Activated CD8-positive, alpha-beta T cell treated with anti-CD3 and anti-CD28 coated beads for 36 hours (primary cell): ENCODE measurements at regions of chr1 and their contacts with region 1.

Region 1: GRCh38 chr1:18902523-18903290 is at the start of gene ALDH4A1:
- DNase-seq: peak; percentile 96
- ATAC-seq: peak; percentile 98
- H3K4me3 Mint-ChIP-seq: peak within 1 kb of the TSS; percentile 87
- H3K27ac Mint-ChIP-seq: peak within 1 kb of the TSS; percentile 98
- H3K4me1 Mint-ChIP-seq: peaks cover 22% of the 10 kb centered on the region
- H3K27me3 Mint-ChIP-seq: no peaks in the 10 kb centered on the region
- CTCF ChIP-seq: no peak
- total RNA-seq, gene ALDH4A1: 3.9 to 4.3 TPM

Region 2: GRCh38 chr1:18814425-18814824 is 88.3 kb before region 1 on chr1:
- CTCF ChIA-PET with region 1: no interaction called
- POLR2A ChIA-PET with region 1: no interaction called
- intact Hi-C with region 1: no loop called
- DNase-seq: no peak
- ATAC-seq: no peak
- H3K4me3 Mint-ChIP-seq: no peak overlapping the region
- H3K27ac Mint-ChIP-seq: no peak overlapping the region
- H3K4me1 Mint-ChIP-seq: no peaks in the 10 kb centered on the region
- H3K27me3 Mint-ChIP-seq: peaks cover 23% of the 10 kb centered on the region
- CTCF ChIP-seq: no peak

Region 3: DNA sequence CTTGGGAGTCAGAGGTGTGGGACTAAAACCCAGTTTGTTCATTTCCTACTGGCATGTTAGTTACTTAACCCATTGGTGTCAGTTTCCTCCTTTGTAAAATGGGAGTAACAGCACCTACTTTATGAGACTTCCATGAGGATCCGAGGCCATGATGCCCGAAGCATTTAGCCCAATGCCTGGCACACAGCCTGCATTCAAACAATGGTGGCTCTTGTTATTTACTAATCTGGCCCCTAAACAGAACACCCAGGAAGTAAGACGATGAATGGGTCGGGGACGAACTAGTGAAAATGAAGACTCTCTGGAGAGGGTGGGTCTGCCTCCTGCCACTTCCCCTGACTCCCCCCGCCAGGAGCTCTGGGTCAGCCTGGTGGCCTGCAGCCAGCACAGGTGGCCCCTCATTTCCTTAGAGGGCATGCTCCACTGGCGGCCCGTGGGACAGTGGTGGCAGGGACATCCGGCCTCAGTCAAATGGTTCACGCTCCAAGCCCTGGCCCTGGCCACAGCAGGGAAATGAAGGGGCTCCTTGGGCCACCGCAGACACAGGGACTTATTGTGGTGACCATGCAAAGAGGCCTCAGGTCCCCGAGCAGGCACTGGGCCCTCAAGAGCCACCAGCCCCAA is 33.8 kb before region 1 on chr1:
- CTCF ChIA-PET with region 1: no interaction called
- POLR2A ChIA-PET with region 1: no interaction called
- intact Hi-C with region 1: no loop called
- DNase-seq: no peak
- ATAC-seq: no peak
- H3K4me3 Mint-ChIP-seq: no peak overlapping the region
- H3K27ac Mint-ChIP-seq: no peak overlapping the region
- H3K4me1 Mint-ChIP-seq: no peaks in the 10 kb centered on the region
- H3K27me3 Mint-ChIP-seq: peaks cover 9% of the 10 kb centered on the region
- CTCF ChIP-seq: no peak

Region 4: GRCh38 chr1:18926315-18927081 is 23.8 kb after region 1 on chr1:
- CTCF ChIA-PET with region 1: interaction called, 26 read pairs
- POLR2A ChIA-PET with region 1: interaction called, 12 read pairs
- intact Hi-C with region 1: no loop called
- DNase-seq: peak; percentile 94
- ATAC-seq: peak; percentile 88
- H3K4me3 Mint-ChIP-seq: peak overlapping the region; percentile 82
- H3K27ac Mint-ChIP-seq: peak overlapping the region; percentile 99
- H3K4me1 Mint-ChIP-seq: peaks cover 81% of the 10 kb centered on the region
- H3K27me3 Mint-ChIP-seq: no peaks in the 10 kb centered on the region
- CTCF ChIP-seq: no peak

Region 5: DNA sequence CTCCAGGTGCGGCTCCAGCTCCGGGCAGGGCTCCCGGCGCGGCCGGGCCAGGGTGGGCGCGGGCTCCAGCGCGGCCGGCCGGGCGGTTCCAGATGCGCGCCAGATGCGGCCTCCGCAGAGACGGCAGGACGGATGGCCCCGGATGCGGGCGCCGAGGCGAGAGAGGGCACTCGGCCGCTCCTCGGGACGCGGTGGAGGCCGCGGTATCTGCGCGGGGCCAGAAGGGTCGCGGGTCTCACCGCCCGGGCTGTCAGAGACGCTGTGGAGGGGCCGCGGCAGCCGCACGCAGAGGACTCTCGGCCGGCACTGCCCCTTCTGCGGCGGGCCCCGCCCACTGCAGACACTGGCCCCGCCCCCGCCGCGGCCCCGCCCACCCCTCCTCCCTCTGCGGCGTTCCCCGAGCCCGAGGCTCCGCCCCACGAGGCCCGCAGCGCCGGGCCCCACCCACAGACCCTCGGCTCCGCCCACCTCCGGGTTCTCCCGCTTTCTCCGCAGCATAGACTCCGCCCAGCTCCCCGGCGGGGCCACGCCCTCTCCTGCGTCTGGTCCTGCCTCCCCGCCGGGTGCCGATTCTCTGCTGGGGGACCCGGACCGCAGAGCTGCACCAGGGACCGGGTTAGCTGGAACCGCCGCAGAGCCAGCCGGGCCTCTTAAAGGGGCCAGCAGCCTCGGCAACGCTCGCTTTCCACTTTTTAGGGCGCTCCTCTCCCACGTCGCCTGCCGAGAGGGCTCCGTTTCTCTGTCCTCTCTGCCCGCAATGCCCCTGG is 53.8 kb after region 1 on chr1 and contains the start of gene IFFO2:
- CTCF ChIA-PET with region 1: interaction called, 33 read pairs
- POLR2A ChIA-PET with region 1: interaction called, 3 read pairs
- intact Hi-C with region 1: loop called (anchors 5 kb)
- DNase-seq: peak; percentile 98
- ATAC-seq: peak; percentile 88
- H3K4me3 Mint-ChIP-seq: peak within 1 kb of the TSS; percentile 82
- H3K27ac Mint-ChIP-seq: peak within 1 kb of the TSS; percentile 85
- H3K4me1 Mint-ChIP-seq: peaks cover 55% of the 10 kb centered on the region
- H3K27me3 Mint-ChIP-seq: no peaks in the 10 kb centered on the region
- CTCF ChIP-seq: no peak
- total RNA-seq, gene IFFO2: 23.7 to 26.4 TPM

Region 6: DNA sequence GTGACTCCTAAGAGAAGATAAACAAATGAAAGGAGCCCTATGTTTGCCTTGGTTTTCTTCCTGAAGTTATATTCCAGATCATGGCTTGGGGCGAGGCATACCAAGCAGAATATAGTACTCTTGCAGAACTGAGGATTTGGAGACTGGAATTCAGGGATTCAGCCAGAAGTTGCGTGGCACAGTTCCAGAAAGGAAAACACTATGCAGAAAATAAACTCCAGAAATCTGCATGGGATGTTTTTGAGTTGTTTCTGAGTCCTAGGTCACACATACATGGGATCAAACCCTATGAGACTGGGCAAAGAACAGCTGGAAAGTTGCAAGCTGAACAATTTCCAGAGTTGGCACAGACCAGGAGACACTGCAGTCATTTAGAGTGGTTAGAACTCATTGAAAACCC is 96.7 kb after region 1 on chr1:
- CTCF ChIA-PET with region 1: interaction called, 10 read pairs
- POLR2A ChIA-PET with region 1: no interaction called
- intact Hi-C with region 1: no loop called
- DNase-seq: no peak
- ATAC-seq: no peak
- H3K4me3 Mint-ChIP-seq: no peak overlapping the region
- H3K27ac Mint-ChIP-seq: no peak overlapping the region
- H3K4me1 Mint-ChIP-seq: peaks cover 33% of the 10 kb centered on the region
- H3K27me3 Mint-ChIP-seq: no peaks in the 10 kb centered on the region
- CTCF ChIP-seq: no peak

Region 7: DNA sequence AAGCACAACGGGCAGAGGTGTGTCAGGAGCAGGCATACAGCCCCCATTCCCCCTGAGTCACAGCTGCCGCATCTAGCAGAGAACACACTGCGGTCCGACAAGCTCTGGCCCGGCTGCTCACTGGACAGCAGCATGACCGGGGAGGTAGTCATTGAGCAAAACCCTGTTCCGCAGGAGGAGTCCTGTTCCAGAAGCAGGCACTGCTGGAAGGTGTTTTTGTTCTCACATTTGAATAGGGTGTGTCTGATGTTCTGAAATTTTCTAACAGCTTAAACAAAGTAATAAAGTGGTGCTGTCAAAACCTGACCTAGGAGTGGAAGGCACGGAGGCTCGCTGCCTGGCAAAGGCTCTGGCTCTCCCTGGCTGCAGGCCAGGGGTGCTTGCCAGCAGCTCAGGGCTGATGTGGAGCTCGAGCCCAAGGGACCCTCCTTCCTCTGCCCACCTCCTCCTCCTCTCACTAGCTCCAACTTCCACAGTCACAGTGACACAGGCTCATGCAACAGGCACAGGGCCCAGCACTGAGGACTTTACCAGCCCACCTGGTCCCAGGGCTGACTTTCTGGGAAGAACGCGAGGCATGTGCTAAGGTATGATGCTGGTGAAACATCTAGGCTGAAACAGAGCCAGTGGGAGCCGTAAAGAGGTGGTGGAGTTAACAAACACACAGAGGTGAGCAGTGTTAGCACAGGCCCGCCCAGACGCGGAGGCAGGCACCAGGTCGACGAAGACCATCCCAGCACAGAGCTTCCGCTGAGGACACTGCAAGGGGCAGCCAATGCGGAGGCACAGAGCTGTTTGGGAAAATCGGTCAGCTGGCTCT is 172.4 kb after region 1 on chr1:
- CTCF ChIA-PET with region 1: interaction called, 17 read pairs
- POLR2A ChIA-PET with region 1: interaction called, 3 read pairs
- intact Hi-C with region 1: loop called (anchors 10 kb)
- DNase-seq: no peak
- ATAC-seq: peak; percentile 34
- H3K4me3 Mint-ChIP-seq: no peak overlapping the region
- H3K27ac Mint-ChIP-seq: peak overlapping the region; percentile 53
- H3K4me1 Mint-ChIP-seq: peaks cover 33% of the 10 kb centered on the region
- H3K27me3 Mint-ChIP-seq: no peaks in the 10 kb centered on the region
- CTCF ChIP-seq: no peak

Region 8: GRCh38 chr1:19232526-19232851 is 329.8 kb after region 1 on chr1:
- CTCF ChIA-PET with region 1: no interaction called
- POLR2A ChIA-PET with region 1: no interaction called
- intact Hi-C with region 1: no loop called
- DNase-seq: no peak
- ATAC-seq: no peak
- H3K4me3 Mint-ChIP-seq: no peak overlapping the region
- H3K27ac Mint-ChIP-seq: no peak overlapping the region
- H3K4me1 Mint-ChIP-seq: no peaks in the 10 kb centered on the region
- H3K27me3 Mint-ChIP-seq: no peaks in the 10 kb centered on the region
- CTCF ChIP-seq: no peak